ENCODE measurements at regions of chr1 and their contacts with region 1.

Region 1: GRCh38 chr1:19341201-19342072 is 29.3 kb downstream of the SLC66A1 start:
- DNase-seq: peak; percentile 76 to 96
- H3K4me3 ChIP-seq: no peak overlapping the region
- H3K27ac ChIP-seq: no peak overlapping the region
- H3K4me1 ChIP-seq: peaks cover 0 to 15% (median 10%) of the 10 kb centered on the region in 4 experiments; a peak in 5 of 7 replicates
- H3K27me3 ChIP-seq: no peaks in the 10 kb centered on the region
- CTCF ChIP-seq: peak; percentile 78 to 95 (median 93)
- EP300 ChIP-seq: no peak
- POLR2A ChIP-seq: 0 out of 3 replicates have a peak, but pooled peaks of 1 of the 2 experiments have one; percentile 29
- RAD21 ChIP-seq: peak; percentile 38 to 48

Region 2: GRCh38 chr1:19178734-19179398 is 162.6 kb before region 1 on chr1:
- CTCF ChIA-PET with region 1: no interaction called
- POLR2A ChIA-PET with region 1: no interaction called
- DNase-seq: no peak
- H3K4me3 ChIP-seq: no peak overlapping the region
- H3K27ac ChIP-seq: no peak overlapping the region
- H3K4me1 ChIP-seq: no peaks in the 10 kb centered on the region
- H3K27me3 ChIP-seq: no peaks in the 10 kb centered on the region
- CTCF ChIP-seq: no peak
- EP300 ChIP-seq: no peak
- POLR2A ChIP-seq: no peak
- RAD21 ChIP-seq: no peak

Region 3: DNA sequence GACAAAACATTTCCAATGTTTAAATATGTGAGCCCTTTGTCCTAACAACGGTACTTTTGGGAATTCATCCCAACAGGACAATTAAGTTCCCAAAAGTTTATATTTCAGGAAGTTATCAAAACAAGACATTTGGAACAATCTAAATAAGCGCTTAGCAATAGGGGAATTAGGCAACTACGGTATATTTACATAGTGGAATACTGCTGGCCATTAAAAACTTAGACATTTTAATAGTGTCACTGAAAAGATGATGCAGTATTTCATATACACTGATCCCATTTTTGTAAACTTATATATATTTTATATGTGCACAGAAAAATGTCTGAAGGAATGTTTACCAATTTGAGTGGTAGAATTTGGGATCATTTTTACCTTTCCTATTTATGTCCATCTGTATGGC is 152.2 kb before region 1 on chr1:
- CTCF ChIA-PET with region 1: no interaction called
- POLR2A ChIA-PET with region 1: no interaction called
- DNase-seq: no peak
- H3K4me3 ChIP-seq: no peak overlapping the region
- H3K27ac ChIP-seq: no peak overlapping the region
- H3K4me1 ChIP-seq: peaks cover 0 to 2% (median 0%) of the 10 kb centered on the region in 4 experiments; a peak in 1 of 7 replicates
- H3K27me3 ChIP-seq: no peaks in the 10 kb centered on the region
- CTCF ChIP-seq: no peak
- EP300 ChIP-seq: no peak
- POLR2A ChIP-seq: no peak
- RAD21 ChIP-seq: no peak

Region 4: DNA sequence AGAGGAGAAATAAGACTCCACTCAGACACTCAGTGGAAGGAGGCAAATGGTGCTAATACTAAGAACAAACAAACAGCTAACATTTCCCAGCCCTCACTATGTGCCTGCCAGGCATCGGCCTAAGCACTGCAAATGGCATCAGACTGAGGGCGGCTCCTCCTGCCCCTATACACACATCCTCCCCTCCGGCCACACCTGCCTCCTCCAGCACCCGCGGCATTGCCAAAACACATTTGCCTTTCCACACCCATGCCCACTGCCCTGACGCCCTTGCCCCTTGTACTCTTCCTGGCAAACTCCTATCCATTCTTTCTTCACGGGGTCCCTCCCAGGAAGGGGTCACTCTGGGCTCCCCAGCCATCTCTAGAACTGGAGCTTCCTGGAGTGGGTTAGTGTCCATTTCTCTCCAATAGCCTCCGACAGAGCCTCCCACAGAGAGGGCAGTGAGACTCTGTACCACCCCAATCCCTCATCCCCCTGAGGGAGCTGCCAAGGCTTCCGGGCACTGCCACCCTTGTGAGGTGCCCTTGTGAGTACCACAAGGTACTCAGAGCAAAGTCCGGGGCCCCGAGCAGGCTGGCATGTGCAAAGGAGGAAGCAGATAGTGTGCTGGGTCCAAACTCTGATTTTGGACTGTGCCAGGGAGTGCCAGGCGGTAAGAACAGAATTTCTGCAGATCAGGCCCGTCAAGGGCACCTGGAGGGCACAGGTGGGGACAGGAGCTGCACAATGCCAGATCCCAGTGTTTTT is 53.8 kb before region 1 on chr1:
- CTCF ChIA-PET with region 1: no interaction called
- POLR2A ChIA-PET with region 1: no interaction called
- DNase-seq: no peak
- H3K4me3 ChIP-seq: no peak overlapping the region
- H3K27ac ChIP-seq: no peak overlapping the region
- H3K4me1 ChIP-seq: no peaks in the 10 kb centered on the region
- H3K27me3 ChIP-seq: peaks cover 8 to 26% (median 20%) of the 10 kb centered on the region in 4 experiments
- CTCF ChIP-seq: no peak
- EP300 ChIP-seq: no peak
- POLR2A ChIP-seq: no peak
- RAD21 ChIP-seq: no peak

Region 5: GRCh38 chr1:19311959-19312781 is 29.3 kb before region 1 on chr1 and contains the starts of genes AKR7A2 and SLC66A1:
- CTCF ChIA-PET with region 1: interaction called, 5 read pairs
- POLR2A ChIA-PET with region 1: interaction called, 143 read pairs
- DNase-seq: peak; percentile 60 to 90
- H3K4me3 ChIP-seq: peak within 1 kb of the TSS; percentile 66 to 91 (median 79)
- H3K27ac ChIP-seq: no peak within 1 kb of the TSS
- H3K4me1 ChIP-seq: peaks cover 0 to 16% (median 9%) of the 10 kb centered on the region in 4 experiments; a peak in 6 of 7 replicates
- H3K27me3 ChIP-seq: peaks cover 0 to 4% (median 1%) of the 10 kb centered on the region in 4 experiments; a peak in 1 of 7 replicates
- CTCF ChIP-seq: peak in 1 of 3 experiments; percentile 8; a peak in 1 of 4 replicates
- EP300 ChIP-seq: no peak
- POLR2A ChIP-seq: peak in 1 of 2 experiments; percentile 65; a peak in 2 of 3 replicates
- RAD21 ChIP-seq: no peak
- total RNA-seq, gene AKR7A2: 32.0 and 34.5 TPM in 2 replicates
- total RNA-seq, gene SLC66A1: 14.0 and 16.8 TPM in 2 replicates

Region 6: GRCh38 chr1:19353596-19353995 is 12.2 kb after region 1 on chr1:
- CTCF ChIA-PET with region 1: interaction called, 72 read pairs
- POLR2A ChIA-PET with region 1: interaction called, 7 read pairs
- DNase-seq: peak; percentile 73 to 79
- H3K4me3 ChIP-seq: no peak overlapping the region
- H3K27ac ChIP-seq: no peak overlapping the region; the same call in 1 of the 2 replicates
- H3K4me1 ChIP-seq: peaks cover 8 to 24% (median 17%) of the 10 kb centered on the region in 4 experiments
- H3K27me3 ChIP-seq: no peaks in the 10 kb centered on the region
- CTCF ChIP-seq: peak in 2 of 3 experiments; percentile 17 to 19; a peak in 3 of 4 replicates
- EP300 ChIP-seq: peak in 1 of 2 experiments; percentile 81; a peak in 1 of 3 replicates
- POLR2A ChIP-seq: no peak
- RAD21 ChIP-seq: peak in 1 of 2 experiments; percentile 7; a peak in 1 of 4 replicates

Region 7: GRCh38 chr1:19361611-19362147 is 20.2 kb after region 1 on chr1:
- CTCF ChIA-PET with region 1: interaction called, 72 read pairs
- POLR2A ChIA-PET with region 1: interaction called, 3 read pairs
- DNase-seq: no peak
- H3K4me3 ChIP-seq: no peak overlapping the region
- H3K27ac ChIP-seq: no peak overlapping the region
- H3K4me1 ChIP-seq: peaks cover 0 to 2% (median 0%) of the 10 kb centered on the region in 4 experiments; a peak in 1 of 7 replicates
- H3K27me3 ChIP-seq: no peaks in the 10 kb centered on the region
- CTCF ChIP-seq: no peak
- EP300 ChIP-seq: no peak
- POLR2A ChIP-seq: no peak
- RAD21 ChIP-seq: no peak

Region 8: GRCh38 chr1:19405761-19406487 is 64.5 kb after region 1 on chr1:
- CTCF ChIA-PET with region 1: interaction called, 62 read pairs
- POLR2A ChIA-PET with region 1: no interaction called
- DNase-seq: no peak
- H3K4me3 ChIP-seq: no peak overlapping the region
- H3K27ac ChIP-seq: no peak overlapping the region
- H3K4me1 ChIP-seq: peaks cover 18 to 31% (median 22%) of the 10 kb centered on the region in 4 experiments
- H3K27me3 ChIP-seq: no peaks in the 10 kb centered on the region
- CTCF ChIP-seq: no peak
- EP300 ChIP-seq: no peak
- POLR2A ChIP-seq: no peak
- RAD21 ChIP-seq: no peak

Region 9: DNA sequence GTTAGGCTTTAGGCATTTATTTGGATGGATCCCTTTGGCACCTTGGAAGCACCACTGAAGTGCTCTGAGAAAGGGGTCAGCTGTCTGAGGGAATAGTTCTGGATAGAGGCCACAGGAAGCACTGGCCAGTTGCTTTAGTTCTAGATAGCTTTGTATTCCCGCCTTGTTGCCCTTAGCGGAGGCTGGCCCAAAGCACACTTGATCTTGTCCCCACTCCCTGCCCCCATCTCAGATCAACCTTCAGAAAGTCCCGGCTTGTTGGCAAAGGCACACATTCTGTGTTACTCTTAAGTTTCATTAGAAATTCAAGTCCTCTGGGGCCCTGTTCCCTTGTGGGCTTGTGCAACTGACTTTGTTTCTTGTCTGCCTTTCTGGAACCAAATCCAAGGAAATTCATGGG is 287.4 kb after region 1 on chr1:
- CTCF ChIA-PET with region 1: interaction called, 15 read pairs
- POLR2A ChIA-PET with region 1: no interaction called
- DNase-seq: no peak
- H3K4me3 ChIP-seq: no peak overlapping the region
- H3K27ac ChIP-seq: no peak overlapping the region
- H3K4me1 ChIP-seq: peaks cover 3 to 9% (median 5%) of the 10 kb centered on the region in 4 experiments; a peak in 5 of 7 replicates
- H3K27me3 ChIP-seq: no peaks in the 10 kb centered on the region
- CTCF ChIP-seq: no peak
- EP300 ChIP-seq: no peak
- POLR2A ChIP-seq: no peak
- RAD21 ChIP-seq: no peak

Region 10: DNA sequence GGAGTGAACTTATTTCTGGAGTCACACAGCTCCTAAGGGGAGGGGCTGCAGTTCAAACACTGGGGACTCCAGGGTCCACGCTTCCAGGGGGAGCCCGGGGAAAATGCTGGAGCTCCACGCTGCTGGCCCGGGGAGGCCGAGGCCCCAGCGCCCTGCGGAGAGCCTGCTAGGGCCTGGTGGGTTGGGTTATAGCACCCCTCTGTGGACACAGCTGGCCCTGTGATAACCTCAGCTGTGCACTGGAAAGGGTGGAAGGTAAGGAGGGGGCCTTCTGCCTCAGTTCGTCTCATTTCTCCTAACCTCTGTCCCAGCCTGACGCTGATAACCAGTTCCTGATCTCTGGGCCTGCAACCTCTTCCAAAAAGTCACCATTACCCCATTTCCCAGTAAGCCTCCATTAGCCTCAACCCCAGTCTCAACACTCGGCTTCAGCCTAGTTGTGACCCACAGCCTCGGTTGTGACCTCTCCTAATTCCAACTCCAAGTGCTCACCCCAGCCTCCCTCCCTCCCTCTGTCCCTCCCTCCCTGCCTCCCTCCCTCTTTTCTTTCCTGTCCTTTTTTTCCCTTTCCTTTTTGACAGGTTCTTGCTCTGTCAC is 309.8 kb after region 1 on chr1:
- CTCF ChIA-PET with region 1: interaction called, 12 read pairs
- POLR2A ChIA-PET with region 1: interaction called, 3 read pairs
- DNase-seq: peak in 1 of 2 experiments; percentile 71
- H3K4me3 ChIP-seq: no peak overlapping the region
- H3K27ac ChIP-seq: no peak overlapping the region
- H3K4me1 ChIP-seq: peaks cover 0 to 3% (median 2%) of the 10 kb centered on the region in 4 experiments; a peak in 4 of 7 replicates
- H3K27me3 ChIP-seq: peaks cover 0 to 4% (median 1%) of the 10 kb centered on the region in 4 experiments; a peak in 4 of 7 replicates
- CTCF ChIP-seq: peak; percentile 78 to 84 (median 78)
- EP300 ChIP-seq: no peak
- POLR2A ChIP-seq: no peak
- RAD21 ChIP-seq: peak; percentile 89 to 91